Naive thymus-derived CD4-positive, alpha-beta T cell (primary cell): ENCODE measurements at regions of chr5 and their contacts with region 1.

Region 1: DNA sequence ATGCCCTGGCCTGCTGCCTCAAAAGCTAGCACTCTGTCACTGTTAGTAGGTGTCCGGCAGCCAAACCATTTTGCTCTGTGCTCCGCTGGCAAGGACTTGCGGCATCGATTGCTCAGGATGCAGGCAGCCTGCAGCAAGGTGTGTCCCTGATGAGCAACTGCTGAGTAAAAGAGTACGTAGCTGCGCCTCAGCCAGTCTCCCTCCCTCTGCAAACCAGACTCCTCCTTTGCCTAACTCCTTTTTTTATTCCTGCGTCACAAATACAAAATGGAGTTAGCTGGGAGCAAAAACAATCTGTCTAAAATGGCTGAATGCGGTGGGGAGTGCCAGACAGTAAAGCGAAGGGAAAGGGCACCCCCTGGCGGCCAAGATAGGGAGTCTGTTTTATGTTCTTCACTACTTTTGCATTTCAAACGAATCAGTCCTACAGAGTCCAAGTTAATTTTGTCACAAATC is 61.1 kb downstream of the DIAPH1 start:
- DNase-seq: peak; percentile 52 to 74 (median 68)
- ATAC-seq: peak; percentile 93
- H3K4me3 ChIP-seq: no peak overlapping the region
- H3K4me3 Mint-ChIP-seq: peak overlapping the region in 2 of 10 donors; percentile 13 to 14
- H3K27ac ChIP-seq: no peak overlapping the region
- H3K27ac Mint-ChIP-seq: peak overlapping the region; percentile 4 to 69 (median 53)
- H3K4me1 ChIP-seq: peaks cover 6 to 7% of the 10 kb centered on the region in 2 donors
- H3K4me1 Mint-ChIP-seq: peaks cover 18 to 46% (median 32%) of the 10 kb centered on the region in 7 donors
- H3K27me3 ChIP-seq: no peaks in the 10 kb centered on the region
- H3K27me3 Mint-ChIP-seq: no peaks in the 10 kb centered on the region

Region 2: GRCh38 chr5:141084487-141084990 is 473.2 kb before region 1 on chr5:
- CTCF ChIA-PET with region 1: interaction called, 3 read pairs
- POLR2A ChIA-PET with region 1: no interaction called
- intact Hi-C with region 1: loop called (anchors 1 to 10 kb)
- DNase-seq: peak in 7 of 9 donors; percentile 17 to 55 (median 31)
- ATAC-seq: peak; percentile 82
- H3K4me3 ChIP-seq: peak overlapping the region; percentile 40
- H3K4me3 Mint-ChIP-seq: peak overlapping the region; percentile 77 to 95 (median 90)
- H3K27ac ChIP-seq: no peak overlapping the region
- H3K27ac Mint-ChIP-seq: peak overlapping the region in 6 of 9 donors; percentile 48 to 90 (median 80)
- H3K4me1 ChIP-seq: no peaks in the 10 kb centered on the region
- H3K4me1 Mint-ChIP-seq: peaks cover 0 to 13% (median 8%) of the 10 kb centered on the region in 7 donors
- H3K27me3 ChIP-seq: no peaks in the 10 kb centered on the region
- H3K27me3 Mint-ChIP-seq: peaks cover 6 to 64% (median 34%) of the 10 kb centered on the region in 5 donors

Region 3: DNA sequence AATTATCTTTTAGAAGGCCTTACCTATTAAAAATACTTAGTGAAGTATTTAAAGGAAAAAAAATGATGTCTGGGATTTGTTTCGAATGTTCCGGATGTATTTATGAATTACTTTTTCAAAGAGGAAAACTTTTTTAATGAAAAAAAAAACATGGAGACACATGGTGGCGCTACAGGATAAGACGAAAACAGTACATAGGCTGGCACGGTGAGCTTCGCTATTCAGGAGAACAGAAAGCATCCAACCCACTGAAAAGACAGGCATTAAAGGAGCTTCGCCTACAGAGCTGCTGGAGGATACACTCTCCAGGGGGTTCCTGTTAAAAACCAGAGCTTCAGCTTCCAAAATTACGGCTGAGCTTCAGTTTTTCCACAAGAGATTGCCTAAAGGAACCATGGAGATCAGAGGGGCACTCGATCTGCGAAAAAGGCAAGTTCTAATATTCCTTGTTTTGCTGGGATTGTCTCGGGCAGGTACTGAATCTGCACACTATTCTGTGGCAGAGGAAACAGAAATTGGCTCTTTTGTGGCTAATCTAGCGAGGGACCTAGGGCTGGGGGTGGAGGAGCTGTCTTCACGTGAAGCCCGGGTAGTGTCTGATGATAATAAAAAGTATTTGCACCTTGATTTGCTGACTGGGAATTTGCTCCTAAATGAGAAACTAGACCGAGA is 334.5 kb before region 1 on chr5 and contains the start of gene PCDHB14:
- CTCF ChIA-PET with region 1: no interaction called
- POLR2A ChIA-PET with region 1: no interaction called
- intact Hi-C with region 1: loop called in 1 of 2 experiments (anchors 1 kb)
- DNase-seq: peak in 1 of 9 donors; percentile 7
- ATAC-seq: no peak
- H3K4me3 ChIP-seq: no peak within 1 kb of the TSS
- H3K4me3 Mint-ChIP-seq: peak within 1 kb of the TSS in 5 of 10 donors; percentile 37 to 65 (median 52)
- H3K27ac ChIP-seq: no peak within 1 kb of the TSS
- H3K27ac Mint-ChIP-seq: no peak within 1 kb of the TSS
- H3K4me1 ChIP-seq: no peaks in the 10 kb centered on the region
- H3K4me1 Mint-ChIP-seq: peaks cover 0 to 9% (median 0%) of the 10 kb centered on the region in 7 donors
- H3K27me3 ChIP-seq: peaks cover 0 to 5% of the 10 kb centered on the region in 2 donors
- H3K27me3 Mint-ChIP-seq: peaks cover 2 to 83% (median 67%) of the 10 kb centered on the region in 5 donors
- total RNA-seq, gene PCDHB14: not detected

Region 4: GRCh38 chr5:141326088-141326854 is 231.4 kb before region 1 on chr5:
- CTCF ChIA-PET with region 1: interaction called, 3 read pairs
- POLR2A ChIA-PET with region 1: interaction called, 26 read pairs
- intact Hi-C with region 1: loop called (anchors 1 kb)
- DNase-seq: peak; percentile 39 to 75 (median 57)
- ATAC-seq: peak; percentile 95
- H3K4me3 ChIP-seq: peak overlapping the region; percentile 73
- H3K4me3 Mint-ChIP-seq: peak overlapping the region; percentile 78 to 98 (median 90)
- H3K27ac ChIP-seq: peak overlapping the region; percentile 53
- H3K27ac Mint-ChIP-seq: peak overlapping the region; percentile 17 to 95 (median 80)
- H3K4me1 ChIP-seq: no peaks in the 10 kb centered on the region
- H3K4me1 Mint-ChIP-seq: peaks cover 0 to 15% (median 7%) of the 10 kb centered on the region in 7 donors
- H3K27me3 ChIP-seq: peaks cover 0 to 5% of the 10 kb centered on the region in 2 donors
- H3K27me3 Mint-ChIP-seq: peaks cover 8 to 48% (median 41%) of the 10 kb centered on the region in 5 donors

Region 5: DNA sequence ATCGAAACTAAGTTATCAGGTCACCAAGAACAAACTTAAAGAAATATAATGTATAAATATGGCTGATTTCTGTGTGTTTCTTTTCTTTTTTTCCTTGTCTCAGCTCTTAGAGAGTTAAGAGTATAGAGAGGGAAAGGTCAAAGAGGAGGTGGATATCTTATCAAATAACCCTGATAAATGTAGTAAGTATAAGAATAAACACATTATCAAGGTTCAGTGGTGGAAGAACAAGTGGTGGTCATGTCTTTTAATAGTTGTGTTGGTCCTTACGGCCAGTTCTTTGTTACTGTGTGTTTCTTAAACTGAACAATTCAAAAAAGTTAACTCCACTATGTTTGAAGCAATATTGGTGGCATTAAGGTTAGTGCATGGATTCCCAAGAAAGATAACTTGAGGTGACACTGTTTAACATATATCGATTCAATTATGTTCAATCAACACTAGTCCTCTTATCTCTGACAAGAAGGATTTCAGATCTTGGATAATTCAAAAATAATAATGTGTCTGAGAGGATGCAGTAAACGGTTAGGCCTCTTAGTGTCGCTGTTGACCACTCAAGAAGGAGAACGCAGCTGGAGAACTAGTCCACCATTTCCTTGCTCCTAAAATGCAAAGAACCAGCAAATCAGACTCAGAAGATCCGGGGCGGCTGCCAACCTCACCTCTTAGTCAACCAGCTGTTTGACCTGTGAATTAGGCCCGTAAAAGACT is 214.3 kb before region 1 on chr5 and contains the start of gene PCDHGA3:
- CTCF ChIA-PET with region 1: no interaction called
- POLR2A ChIA-PET with region 1: no interaction called
- intact Hi-C with region 1: loop called in 1 of 2 experiments (anchors 5 kb)
- DNase-seq: no peak
- ATAC-seq: no peak
- H3K4me3 ChIP-seq: no peak within 1 kb of the TSS
- H3K4me3 Mint-ChIP-seq: peak within 1 kb of the TSS in 7 of 10 donors; percentile 48 to 76 (median 57)
- H3K27ac ChIP-seq: no peak within 1 kb of the TSS
- H3K27ac Mint-ChIP-seq: peak within 1 kb of the TSS in 1 of 9 donors; percentile 38
- H3K4me1 ChIP-seq: no peaks in the 10 kb centered on the region
- H3K4me1 Mint-ChIP-seq: no peaks in the 10 kb centered on the region
- H3K27me3 ChIP-seq: peaks cover 3 to 11% of the 10 kb centered on the region in 2 donors
- H3K27me3 Mint-ChIP-seq: peaks cover 26 to 82% (median 79%) of the 10 kb centered on the region in 5 donors
- total RNA-seq, gene PCDHGA3: 0.24 TPM in 1 of 5 experiments, not detected in the others

Region 6: GRCh38 chr5:141359790-141360426 is 197.8 kb before region 1 on chr5 and contains the start of gene PCDHGB2:
- CTCF ChIA-PET with region 1: no interaction called
- POLR2A ChIA-PET with region 1: no interaction called
- intact Hi-C with region 1: loop called in 1 of 2 experiments (anchors 1 kb)
- DNase-seq: peak in 1 of 9 donors; percentile 22
- ATAC-seq: peak; percentile 54
- H3K4me3 ChIP-seq: peak within 1 kb of the TSS; percentile 43
- H3K4me3 Mint-ChIP-seq: peak within 1 kb of the TSS; percentile 33 to 87 (median 78)
- H3K27ac ChIP-seq: no peak within 1 kb of the TSS
- H3K27ac Mint-ChIP-seq: peak within 1 kb of the TSS in 3 of 9 donors; percentile 48 to 57 (median 56)
- H3K4me1 ChIP-seq: no peaks in the 10 kb centered on the region
- H3K4me1 Mint-ChIP-seq: peaks cover 0 to 6% (median 3%) of the 10 kb centered on the region in 7 donors
- H3K27me3 ChIP-seq: peaks cover 5 to 19% of the 10 kb centered on the region in 2 donors
- H3K27me3 Mint-ChIP-seq: peaks cover 37 to 90% (median 87%) of the 10 kb centered on the region in 5 donors
- total RNA-seq, gene PCDHGB2: 0.24 to 1.3 (median 0.36) TPM in 4 of 5 experiments, not detected in the other

Region 7: DNA sequence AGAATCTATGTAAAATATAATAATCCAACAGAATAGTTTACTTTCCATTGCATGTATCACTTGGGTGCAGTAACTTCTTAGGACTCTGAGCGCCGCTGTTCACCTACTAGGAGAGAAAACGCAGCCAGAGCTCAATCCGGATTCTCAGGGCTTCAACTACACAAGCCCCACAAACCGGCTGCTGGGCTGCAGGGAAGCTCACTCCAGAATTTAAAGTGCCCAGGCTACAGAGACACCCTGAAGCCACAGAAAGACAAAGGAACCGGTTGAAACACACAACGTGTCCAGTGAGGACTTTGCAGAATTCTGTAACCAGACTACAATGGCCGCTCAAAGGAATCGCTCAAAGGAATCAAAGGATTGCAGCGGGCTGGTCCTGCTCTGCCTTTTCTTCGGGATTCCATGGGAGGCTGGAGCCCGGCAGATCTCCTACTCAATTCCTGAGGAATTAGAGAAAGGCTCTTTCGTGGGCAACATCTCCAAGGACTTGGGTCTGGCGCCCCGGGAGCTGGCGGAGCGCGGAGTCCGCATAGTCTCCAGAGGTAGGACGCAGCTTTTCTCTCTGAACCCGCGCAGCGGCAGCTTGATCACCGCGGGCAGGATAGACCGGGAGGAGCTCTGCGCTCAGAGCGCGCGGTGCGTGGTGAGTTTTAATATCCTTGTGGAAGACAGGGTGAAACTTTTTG is 144.7 kb before region 1 on chr5 and contains the start of gene PCDHGA10:
- CTCF ChIA-PET with region 1: interaction called, 4 read pairs
- POLR2A ChIA-PET with region 1: interaction called, 5 read pairs
- intact Hi-C with region 1: loop called (anchors 1 kb)
- DNase-seq: peak in 7 of 9 donors; percentile 38 to 66 (median 52)
- ATAC-seq: peak; percentile 84
- H3K4me3 ChIP-seq: peak within 1 kb of the TSS; percentile 73
- H3K4me3 Mint-ChIP-seq: peak within 1 kb of the TSS; percentile 83 to 92 (median 87)
- H3K27ac ChIP-seq: no peak within 1 kb of the TSS
- H3K27ac Mint-ChIP-seq: peak within 1 kb of the TSS in 2 of 9 donors; percentile 54 to 56
- H3K4me1 ChIP-seq: peaks cover 0 to 5% of the 10 kb centered on the region in 2 donors
- H3K4me1 Mint-ChIP-seq: peaks cover 13 to 27% (median 19%) of the 10 kb centered on the region in 7 donors
- H3K27me3 ChIP-seq: peaks cover 23% of the 10 kb centered on the region in 2 donors
- H3K27me3 Mint-ChIP-seq: peaks cover 69 to 80% (median 75%) of the 10 kb centered on the region in 5 donors
- total RNA-seq, gene PCDHGA10: 0.11 to 0.39 (median 0.24) TPM